ENCODE measurements at regions of chr11 and their contacts with region 1.

Region 1: DNA sequence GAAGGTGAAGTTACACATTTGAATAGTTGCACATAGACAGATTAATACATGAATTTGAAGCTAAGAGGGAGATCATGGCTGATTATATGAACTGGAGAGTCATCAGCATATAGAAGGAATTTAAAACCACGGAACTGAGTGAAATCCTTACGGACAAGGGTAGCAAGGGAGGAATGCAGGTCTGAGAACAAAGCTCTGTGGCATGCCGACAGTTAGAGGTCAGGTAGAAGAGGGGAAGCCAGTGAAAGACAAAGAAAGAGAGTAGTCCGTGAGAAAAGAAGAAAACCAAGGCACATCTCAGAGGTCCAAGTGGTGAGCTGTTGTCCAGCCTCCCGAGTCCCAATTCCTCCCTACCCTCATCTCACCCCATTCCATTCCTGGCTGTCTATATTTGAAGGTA is 11.8 kb upstream of the SYT9 start:
- DNase-seq: no peak
- ATAC-seq: no peak
- H3K4me3 ChIP-seq: no peak overlapping the region
- H3K27ac ChIP-seq: no peak overlapping the region
- H3K4me1 ChIP-seq: no peaks in the 10 kb centered on the region
- H3K27me3 ChIP-seq: no peaks in the 10 kb centered on the region

Region 2: GRCh38 chr11:7196396-7197146 is 43.3 kb before region 1 on chr11:
- intact Hi-C with region 1: no loop called
- DNase-seq: no peak
- ATAC-seq: no peak
- H3K4me3 ChIP-seq: no peak overlapping the region
- H3K27ac ChIP-seq: no peak overlapping the region
- H3K4me1 ChIP-seq: no peaks in the 10 kb centered on the region
- H3K27me3 ChIP-seq: no peaks in the 10 kb centered on the region

Region 3: DNA sequence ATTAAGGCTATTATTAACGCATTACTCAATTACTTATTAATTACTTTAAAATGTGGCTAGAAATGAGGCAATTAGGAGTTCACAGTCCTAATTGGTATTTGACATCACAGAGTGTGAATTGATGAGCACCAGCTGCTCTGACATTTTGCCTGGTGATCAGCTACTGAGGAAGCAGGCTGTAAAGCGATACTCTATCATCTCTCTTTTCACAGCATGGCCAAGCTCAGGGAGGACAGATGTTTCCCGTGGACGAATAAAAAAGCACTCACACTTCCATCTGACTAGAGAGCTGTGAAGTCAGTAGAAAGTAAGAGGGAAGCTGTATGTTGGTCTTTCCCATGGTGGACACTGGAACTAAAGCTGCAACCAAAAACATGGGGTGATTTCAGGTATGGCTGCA is 17.3 kb before region 1 on chr11:
- intact Hi-C with region 1: loop called in 1 of 2 experiments (anchors 2 kb)
- DNase-seq: no peak
- ATAC-seq: no peak
- H3K4me3 ChIP-seq: no peak overlapping the region
- H3K27ac ChIP-seq: no peak overlapping the region
- H3K4me1 ChIP-seq: no peaks in the 10 kb centered on the region
- H3K27me3 ChIP-seq: no peaks in the 10 kb centered on the region